B cell (primary cell): ENCODE measurements at regions of chr1 and their contacts with region 1.

Region 1: DNA sequence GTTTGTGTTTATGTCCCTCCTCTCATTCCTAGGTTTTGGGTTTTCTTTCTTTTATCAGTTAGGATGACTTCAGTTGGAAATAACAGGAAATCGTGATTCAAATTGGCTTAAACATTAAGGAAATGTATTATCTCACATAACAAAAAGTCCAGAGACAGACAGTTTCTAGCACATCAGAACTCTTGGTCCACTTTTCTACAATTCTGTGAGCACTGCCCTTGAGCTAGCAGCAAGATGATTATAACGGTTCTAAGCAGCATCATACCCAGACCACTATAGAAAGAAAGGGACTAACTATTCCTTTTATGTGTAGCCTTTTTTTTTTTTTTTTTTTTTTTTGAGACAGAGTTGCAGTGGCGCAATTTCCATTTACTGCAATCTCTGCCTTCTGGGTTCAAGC is 18.9 kb downstream of the FCGR2B start:
- DNase-seq: no peak
- ATAC-seq: no peak
- H3K4me3 ChIP-seq: no peak overlapping the region
- H3K4me3 Mint-ChIP-seq: no peak overlapping the region
- H3K27ac ChIP-seq: no peak overlapping the region
- H3K27ac Mint-ChIP-seq: no peak overlapping the region
- H3K4me1 ChIP-seq: no peaks in the 10 kb centered on the region
- H3K4me1 Mint-ChIP-seq: peaks cover 3% of the 10 kb centered on the region
- H3K27me3 ChIP-seq: no peaks in the 10 kb centered on the region
- H3K27me3 Mint-ChIP-seq: no peaks in the 10 kb centered on the region
- CTCF ChIP-seq: no peak

Region 2: GRCh38 chr1:161726596-161727457 is 44.9 kb after region 1 on chr1:
- CTCF ChIA-PET with region 1: interaction called, 3 read pairs
- POLR2A ChIA-PET with region 1: no interaction called
- intact Hi-C with region 1: loop called (anchors 5 kb)
- DNase-seq: peak; percentile 81
- ATAC-seq: peak; percentile 72
- H3K4me3 ChIP-seq: peak overlapping the region; percentile 64 to 88 (median 85)
- H3K4me3 Mint-ChIP-seq: peak overlapping the region; percentile 100
- H3K27ac ChIP-seq: peak overlapping the region; percentile 62 to 73
- H3K27ac Mint-ChIP-seq: peak overlapping the region; percentile 97
- H3K4me1 ChIP-seq: peaks cover 21 to 34% of the 10 kb centered on the region in 2 donors
- H3K4me1 Mint-ChIP-seq: peaks cover 49% of the 10 kb centered on the region
- H3K27me3 ChIP-seq: peaks cover 0 to 7% (median 0%) of the 10 kb centered on the region in 4 experiments
- H3K27me3 Mint-ChIP-seq: no peaks in the 10 kb centered on the region
- CTCF ChIP-seq: no peak

Region 3: DNA sequence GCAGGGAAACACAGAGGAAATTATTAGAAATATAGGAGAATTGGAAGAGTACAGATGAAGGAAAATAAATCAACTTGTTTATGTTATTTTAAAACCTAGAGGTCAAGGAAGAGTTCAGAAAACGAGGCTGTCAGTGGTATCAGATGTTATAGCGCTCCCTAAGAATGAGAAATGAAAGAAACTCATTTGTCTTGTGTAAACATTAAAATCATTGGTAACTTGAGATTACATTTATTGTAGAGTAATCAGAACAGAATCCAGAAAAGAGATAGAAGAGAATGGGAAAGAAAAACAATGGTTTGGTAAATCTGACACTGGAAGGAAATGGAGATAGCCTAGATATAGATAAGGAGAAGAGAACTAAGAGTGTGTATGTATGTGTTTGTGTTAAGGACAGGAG is 190.6 kb after region 1 on chr1:
- CTCF ChIA-PET with region 1: no interaction called
- POLR2A ChIA-PET with region 1: no interaction called
- intact Hi-C with region 1: no loop called
- DNase-seq: no peak
- ATAC-seq: no peak
- H3K4me3 ChIP-seq: no peak overlapping the region
- H3K4me3 Mint-ChIP-seq: no peak overlapping the region
- H3K27ac ChIP-seq: no peak overlapping the region
- H3K27ac Mint-ChIP-seq: no peak overlapping the region
- H3K4me1 ChIP-seq: no peaks in the 10 kb centered on the region
- H3K4me1 Mint-ChIP-seq: no peaks in the 10 kb centered on the region
- H3K27me3 ChIP-seq: no peaks in the 10 kb centered on the region
- H3K27me3 Mint-ChIP-seq: no peaks in the 10 kb centered on the region
- CTCF ChIP-seq: no peak